ENCODE measurements at regions of chr3 and their contacts with region 1.

Region 1: DNA sequence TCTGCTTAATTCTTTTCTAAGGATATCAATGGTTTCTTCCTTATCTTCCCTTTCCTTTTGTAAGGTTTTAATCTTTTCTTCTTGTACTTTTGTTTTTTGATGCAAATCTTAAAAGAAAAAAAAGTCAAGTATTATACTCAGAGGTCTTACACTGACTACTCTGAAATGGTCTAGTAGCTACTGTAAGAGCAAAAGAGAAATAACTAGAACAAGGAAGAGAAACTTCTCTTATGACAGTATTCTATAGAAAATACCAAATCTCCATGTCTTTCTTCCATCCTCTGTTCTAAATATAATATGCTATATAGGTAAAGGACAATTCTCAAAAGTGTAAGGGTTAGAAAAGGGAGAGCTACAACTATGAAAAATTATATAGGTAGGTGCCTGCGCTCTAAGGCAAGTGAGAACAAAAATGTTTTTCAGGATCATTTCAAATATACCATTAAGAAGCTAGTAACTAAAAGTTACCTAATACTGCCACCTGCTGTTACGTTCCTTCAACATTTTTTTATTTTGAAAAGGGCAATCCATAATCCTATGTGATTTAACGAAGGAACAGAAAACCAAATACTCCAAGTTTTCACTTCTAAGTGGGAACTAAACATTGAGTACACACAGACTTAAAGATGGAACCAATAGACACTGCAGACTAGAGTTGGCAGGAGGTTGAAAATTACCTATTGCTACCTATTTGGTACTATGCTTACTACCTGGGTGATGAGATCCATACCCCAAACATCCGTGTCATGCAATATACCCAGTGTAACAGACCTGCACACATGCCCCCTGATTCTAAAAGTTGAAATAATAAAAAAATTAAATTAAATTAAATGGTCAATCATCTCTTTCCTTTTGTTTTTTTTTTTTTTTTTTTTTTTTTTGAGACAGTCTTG is 36.7 kb downstream of the CIP2A start:
- DNase-seq: no peak
- H3K4me3 Mint-ChIP-seq: no peak overlapping the region
- H3K27ac Mint-ChIP-seq: no peak overlapping the region
- H3K4me1 Mint-ChIP-seq: peaks cover 6% of the 10 kb centered on the region
- H3K27me3 Mint-ChIP-seq: no peaks in the 10 kb centered on the region

Region 2: DNA sequence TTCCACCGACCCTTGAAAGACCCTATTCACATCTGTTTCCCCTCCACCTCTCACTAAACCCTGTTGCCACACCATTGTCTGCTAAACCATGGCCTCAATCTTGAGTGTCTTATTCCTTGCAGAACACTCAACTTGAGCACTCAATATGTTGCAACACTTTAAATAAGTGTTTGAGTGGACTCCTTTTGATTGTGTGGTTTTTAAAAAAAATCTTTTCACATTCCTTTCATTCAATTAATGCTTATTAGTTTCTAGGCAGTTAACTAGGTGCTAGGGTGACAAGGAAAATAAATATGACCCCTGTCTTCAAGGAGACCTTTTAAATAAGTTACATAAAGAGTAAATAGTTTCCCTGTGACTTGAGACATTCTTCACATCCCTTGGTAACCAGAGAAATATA is 269.5 kb before region 1 on chr3:
- CTCF ChIA-PET with region 1: no interaction called
- POLR2A ChIA-PET with region 1: no interaction called
- DNase-seq: no peak
- H3K4me3 Mint-ChIP-seq: no peak overlapping the region
- H3K27ac Mint-ChIP-seq: no peak overlapping the region
- H3K4me1 Mint-ChIP-seq: peaks cover 2% of the 10 kb centered on the region
- H3K27me3 Mint-ChIP-seq: peaks cover 2% of the 10 kb centered on the region

Region 3: GRCh38 chr3:108489771-108490170 is 62.7 kb before region 1 on chr3:
- CTCF ChIA-PET with region 1: interaction called, 15 read pairs
- POLR2A ChIA-PET with region 1: no interaction called
- DNase-seq: peak; percentile 29
- H3K4me3 Mint-ChIP-seq: no peak overlapping the region
- H3K27ac Mint-ChIP-seq: no peak overlapping the region
- H3K4me1 Mint-ChIP-seq: peaks cover 4% of the 10 kb centered on the region
- H3K27me3 Mint-ChIP-seq: no peaks in the 10 kb centered on the region